ENCODE measurements at regions of chr5 and their contacts with region 1.

Region 1: GRCh38 chr5:38441453-38442246 is 114.8 kb downstream of the LIFR start:
- DNase-seq: peak; percentile 44
- ATAC-seq: peak; percentile 95
- H3K4me3 Mint-ChIP-seq: no peak overlapping the region
- H3K27ac Mint-ChIP-seq: no peak overlapping the region
- H3K4me1 Mint-ChIP-seq: no peaks in the 10 kb centered on the region
- H3K27me3 Mint-ChIP-seq: peaks cover 51% of the 10 kb centered on the region
- CTCF ChIP-seq: peak; percentile 88

Region 2: DNA sequence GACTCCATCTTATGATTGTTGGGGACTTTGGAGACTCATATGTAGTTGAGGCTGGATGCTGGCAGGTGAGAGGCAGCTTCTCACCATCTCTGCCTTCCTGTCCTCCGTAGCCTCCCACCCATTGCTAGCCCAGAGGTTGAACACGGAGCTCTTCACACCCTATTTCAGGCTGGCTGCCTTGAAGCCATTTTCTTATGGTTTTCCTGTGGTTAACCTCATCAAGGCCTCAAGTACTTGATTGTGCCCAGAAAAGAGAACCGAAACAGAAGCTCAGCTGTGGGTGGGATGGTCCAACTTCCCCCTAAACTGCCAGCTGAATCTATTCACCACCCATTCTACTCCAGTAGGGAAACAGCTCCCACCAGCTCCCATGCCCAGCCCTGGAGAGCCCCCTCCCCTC is 11.9 kb after region 1 on chr5:
- CTCF ChIA-PET with region 1: interaction called, 13 read pairs
- POLR2A ChIA-PET with region 1: no interaction called
- intact Hi-C with region 1: no loop called
- DNase-seq: no peak
- ATAC-seq: peak; percentile 90
- H3K4me3 Mint-ChIP-seq: no peak overlapping the region
- H3K27ac Mint-ChIP-seq: no peak overlapping the region
- H3K4me1 Mint-ChIP-seq: peaks cover 15% of the 10 kb centered on the region
- H3K27me3 Mint-ChIP-seq: peaks cover 61% of the 10 kb centered on the region
- CTCF ChIP-seq: no peak

Region 3: GRCh38 chr5:38551030-38552017 is 109.7 kb after region 1 on chr5:
- CTCF ChIA-PET with region 1: interaction called, 13 read pairs
- POLR2A ChIA-PET with region 1: no interaction called
- intact Hi-C with region 1: loop called (anchors 1 kb)
- DNase-seq: no peak
- ATAC-seq: no peak
- H3K4me3 Mint-ChIP-seq: no peak overlapping the region
- H3K27ac Mint-ChIP-seq: no peak overlapping the region
- H3K4me1 Mint-ChIP-seq: peaks cover 5% of the 10 kb centered on the region
- H3K27me3 Mint-ChIP-seq: peaks cover 50% of the 10 kb centered on the region
- CTCF ChIP-seq: no peak

Region 4: GRCh38 chr5:38739007-38739743 is 297.5 kb after region 1 on chr5:
- CTCF ChIA-PET with region 1: no interaction called
- POLR2A ChIA-PET with region 1: no interaction called
- intact Hi-C with region 1: no loop called
- DNase-seq: no peak
- ATAC-seq: no peak
- H3K4me3 Mint-ChIP-seq: no peak overlapping the region
- H3K27ac Mint-ChIP-seq: no peak overlapping the region
- H3K4me1 Mint-ChIP-seq: no peaks in the 10 kb centered on the region
- H3K27me3 Mint-ChIP-seq: no peaks in the 10 kb centered on the region
- CTCF ChIP-seq: no peak

Region 5: DNA sequence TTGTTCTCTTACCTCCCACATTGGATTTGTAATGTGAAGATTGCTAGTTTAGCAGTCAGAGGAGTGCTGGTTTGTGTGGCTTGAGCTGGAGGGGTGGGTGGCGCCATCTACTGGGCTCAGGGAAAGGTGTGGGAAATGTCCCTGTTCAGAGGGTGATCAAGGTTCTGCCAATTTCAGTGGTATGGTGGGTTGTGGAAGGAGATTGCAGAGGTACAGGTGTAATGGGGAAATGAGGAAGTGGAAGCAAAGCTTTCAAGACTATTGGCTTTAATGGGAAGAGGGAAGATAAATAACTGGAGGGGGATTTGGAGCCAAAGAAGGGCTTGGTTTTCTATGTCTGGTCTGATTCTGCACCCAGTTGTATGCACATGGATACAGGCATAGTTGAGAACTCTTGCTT is 480.5 kb after region 1 on chr5:
- CTCF ChIA-PET with region 1: interaction called, 59 read pairs
- POLR2A ChIA-PET with region 1: no interaction called
- intact Hi-C with region 1: loop called (anchors 1 kb)
- DNase-seq: no peak
- ATAC-seq: no peak
- H3K4me3 Mint-ChIP-seq: no peak overlapping the region
- H3K27ac Mint-ChIP-seq: no peak overlapping the region
- H3K4me1 Mint-ChIP-seq: no peaks in the 10 kb centered on the region
- H3K27me3 Mint-ChIP-seq: peaks cover 25% of the 10 kb centered on the region
- CTCF ChIP-seq: no peak

Region 6: DNA sequence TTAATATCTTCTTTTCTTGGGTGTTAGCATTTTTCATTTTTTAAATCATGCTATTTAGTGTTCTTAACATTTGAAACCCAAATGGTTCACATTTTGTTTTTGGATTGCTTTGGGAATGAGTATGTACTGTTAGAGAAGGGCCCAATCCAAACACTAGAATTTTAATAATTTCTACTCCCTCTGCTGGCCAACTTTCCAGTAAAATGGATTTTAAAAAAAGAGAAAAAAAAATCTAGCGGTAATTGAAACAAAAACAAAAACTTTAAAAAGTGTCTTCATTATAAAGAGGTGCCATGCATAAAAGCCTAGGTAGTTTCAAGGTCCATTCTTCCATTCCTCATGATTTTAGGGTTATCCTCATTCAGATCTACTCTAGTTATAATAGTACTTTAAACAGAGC is 664.7 kb after region 1 on chr5:
- CTCF ChIA-PET with region 1: no interaction called
- POLR2A ChIA-PET with region 1: no interaction called
- intact Hi-C with region 1: loop called (anchors 1 kb)
- DNase-seq: no peak
- ATAC-seq: no peak
- H3K4me3 Mint-ChIP-seq: no peak overlapping the region
- H3K27ac Mint-ChIP-seq: no peak overlapping the region
- H3K4me1 Mint-ChIP-seq: peaks cover 4% of the 10 kb centered on the region
- H3K27me3 Mint-ChIP-seq: no peaks in the 10 kb centered on the region
- CTCF ChIP-seq: no peak

Region 7: GRCh38 chr5:39283231-39283818 is 841.7 kb after region 1 on chr5:
- CTCF ChIA-PET with region 1: interaction called, 15 read pairs
- POLR2A ChIA-PET with region 1: no interaction called
- intact Hi-C with region 1: loop called (anchors 1 kb)
- DNase-seq: no peak
- ATAC-seq: peak; percentile 75
- H3K4me3 Mint-ChIP-seq: no peak overlapping the region
- H3K27ac Mint-ChIP-seq: no peak overlapping the region
- H3K4me1 Mint-ChIP-seq: peaks cover 2% of the 10 kb centered on the region
- H3K27me3 Mint-ChIP-seq: peaks cover 15% of the 10 kb centered on the region
- CTCF ChIP-seq: peak; percentile 38

Measured in activated B cell treated with CpG ODN at 0.5 μM for 24 hours (primary cell).